ENCODE measurements at regions of chr5 and their contacts with region 1.

Region 1: GRCh38 chr5:34674187-34674586 is 18.1 kb downstream of the RAI14 start:
- DNase-seq: peak; percentile 47 to 88
- H3K4me3 ChIP-seq: no peak overlapping the region
- H3K27ac ChIP-seq: peak overlapping the region; percentile 66
- H3K4me1 ChIP-seq: peaks cover 44% of the 10 kb centered on the region
- H3K27me3 ChIP-seq: no peaks in the 10 kb centered on the region
- CTCF ChIP-seq: no peak

Region 2: DNA sequence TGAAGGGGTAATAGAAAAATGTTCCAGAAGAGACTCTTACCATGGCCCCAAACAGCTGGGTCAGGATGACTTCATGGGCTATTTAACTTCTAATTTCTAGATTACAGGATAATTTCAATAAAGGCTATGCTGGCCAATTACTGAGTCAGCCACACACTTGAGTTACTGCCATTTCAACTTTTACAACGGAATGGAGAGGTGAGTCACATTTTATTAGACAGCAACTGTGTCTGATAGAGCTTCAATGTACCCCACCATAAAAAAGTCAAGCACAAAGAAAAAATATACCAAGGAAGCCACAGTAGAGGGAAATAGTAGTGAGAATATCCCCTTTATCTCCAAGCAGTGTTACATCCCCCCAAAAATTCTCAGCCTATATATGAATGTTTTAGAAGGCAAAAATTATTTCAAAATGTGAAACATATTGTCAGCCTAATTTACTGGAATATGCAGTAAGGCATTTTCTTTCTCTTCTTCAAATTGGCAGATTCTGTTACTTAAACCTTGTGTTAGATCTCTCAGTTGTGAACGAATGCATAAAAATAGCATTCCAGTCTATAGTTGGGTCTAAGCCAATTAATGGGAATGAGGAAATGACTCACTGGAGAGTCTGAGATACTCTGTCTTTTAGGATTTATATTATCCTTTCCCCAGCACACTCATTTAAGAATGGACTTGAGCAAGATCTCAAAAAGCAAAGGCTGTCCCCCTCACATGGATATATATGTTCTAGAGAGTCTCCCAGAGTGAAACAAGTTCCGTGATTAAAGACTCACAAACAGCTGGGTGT is 65.1 kb before region 1 on chr5:
- CTCF ChIA-PET with region 1: no interaction called
- POLR2A ChIA-PET with region 1: interaction called, 19 read pairs
- intact Hi-C with region 1: no loop called
- DNase-seq: peak; percentile 43 to 94
- H3K4me3 ChIP-seq: peak overlapping the region; percentile 12; the same call in 1 of the 2 replicates
- H3K27ac ChIP-seq: peak overlapping the region; percentile 82
- H3K4me1 ChIP-seq: peaks cover 39% of the 10 kb centered on the region
- H3K27me3 ChIP-seq: no peaks in the 10 kb centered on the region
- CTCF ChIP-seq: no peak

Region 3: DNA sequence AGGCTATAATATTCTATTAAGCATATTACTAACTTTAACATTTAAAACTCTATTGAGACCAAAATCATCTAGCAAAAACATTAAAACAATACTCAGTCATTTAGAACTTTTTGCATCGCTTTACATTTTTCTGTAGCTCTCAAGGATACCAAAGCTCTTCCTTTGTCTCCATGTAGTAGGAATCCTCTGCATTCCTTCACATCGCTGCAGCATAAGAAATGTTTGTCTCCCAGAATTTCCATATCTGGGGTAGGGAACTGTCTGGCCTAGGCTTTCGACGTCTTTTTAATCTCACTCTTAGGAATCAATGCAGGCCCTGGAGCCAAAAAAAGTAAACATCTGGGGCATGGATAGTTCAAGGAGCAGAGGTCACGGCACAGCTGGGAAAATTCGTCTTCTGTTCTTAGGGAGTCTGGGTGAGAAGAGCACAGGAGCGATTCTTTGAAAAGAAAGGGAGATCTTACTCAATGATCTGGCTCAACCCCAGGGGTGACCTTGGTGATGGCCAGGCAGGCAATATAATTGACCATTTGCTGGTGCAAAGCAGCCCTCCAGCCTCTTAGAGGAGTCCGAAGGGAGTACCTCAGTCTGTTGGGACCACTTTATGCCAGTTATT is 41.3 kb before region 1 on chr5:
- CTCF ChIA-PET with region 1: no interaction called
- POLR2A ChIA-PET with region 1: no interaction called
- intact Hi-C with region 1: no loop called
- DNase-seq: no peak
- H3K4me3 ChIP-seq: no peak overlapping the region
- H3K27ac ChIP-seq: no peak overlapping the region
- H3K4me1 ChIP-seq: no peaks in the 10 kb centered on the region
- H3K27me3 ChIP-seq: no peaks in the 10 kb centered on the region
- CTCF ChIP-seq: no peak

Region 4: DNA sequence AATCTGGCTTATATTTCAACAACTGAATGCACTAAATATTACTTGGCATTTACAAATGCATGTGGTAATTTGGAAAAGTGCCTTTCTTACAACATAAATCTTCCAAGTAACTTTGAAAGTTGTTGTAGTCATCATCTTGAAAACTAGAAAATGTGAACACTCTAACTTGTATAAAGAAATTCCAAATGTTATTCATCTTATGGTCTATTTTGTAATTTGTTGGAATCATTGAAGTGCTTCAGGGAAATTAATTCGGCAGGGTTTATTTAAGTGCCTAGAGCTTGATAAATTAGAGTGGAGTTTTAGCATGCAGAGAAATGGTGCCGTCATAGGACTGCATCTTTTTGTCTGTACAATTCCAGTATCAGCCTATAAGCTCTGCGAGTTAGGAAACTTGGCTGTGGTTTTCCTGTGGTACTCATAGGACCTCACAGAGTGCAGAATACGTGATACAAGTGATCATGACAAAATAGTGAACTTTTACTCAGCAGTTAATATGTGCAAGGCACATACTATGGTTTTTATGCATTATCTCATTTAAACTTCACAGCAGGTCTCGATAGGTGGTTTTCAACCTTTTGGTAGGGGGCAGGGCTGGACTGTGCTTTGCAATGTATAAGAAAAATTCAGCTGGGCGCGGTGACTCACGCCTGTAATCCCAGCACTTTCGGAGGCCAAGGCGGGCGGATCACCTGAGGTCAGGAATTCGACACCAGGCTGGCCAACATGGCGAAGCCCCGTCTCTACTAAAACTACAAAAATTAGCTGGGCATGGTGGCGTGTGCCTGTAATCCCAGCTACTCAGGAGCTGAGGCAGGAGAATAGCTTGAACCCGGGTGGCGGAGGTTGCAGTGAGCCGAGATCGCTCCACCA is 61.5 kb after region 1 on chr5:
- CTCF ChIA-PET with region 1: no interaction called
- POLR2A ChIA-PET with region 1: no interaction called
- intact Hi-C with region 1: loop called (anchors 5 kb)
- DNase-seq: peak; percentile 50 to 67
- H3K4me3 ChIP-seq: no peak overlapping the region
- H3K27ac ChIP-seq: peak overlapping the region; percentile 20
- H3K4me1 ChIP-seq: peaks cover 14% of the 10 kb centered on the region
- H3K27me3 ChIP-seq: no peaks in the 10 kb centered on the region
- CTCF ChIP-seq: no peak

Region 5: DNA sequence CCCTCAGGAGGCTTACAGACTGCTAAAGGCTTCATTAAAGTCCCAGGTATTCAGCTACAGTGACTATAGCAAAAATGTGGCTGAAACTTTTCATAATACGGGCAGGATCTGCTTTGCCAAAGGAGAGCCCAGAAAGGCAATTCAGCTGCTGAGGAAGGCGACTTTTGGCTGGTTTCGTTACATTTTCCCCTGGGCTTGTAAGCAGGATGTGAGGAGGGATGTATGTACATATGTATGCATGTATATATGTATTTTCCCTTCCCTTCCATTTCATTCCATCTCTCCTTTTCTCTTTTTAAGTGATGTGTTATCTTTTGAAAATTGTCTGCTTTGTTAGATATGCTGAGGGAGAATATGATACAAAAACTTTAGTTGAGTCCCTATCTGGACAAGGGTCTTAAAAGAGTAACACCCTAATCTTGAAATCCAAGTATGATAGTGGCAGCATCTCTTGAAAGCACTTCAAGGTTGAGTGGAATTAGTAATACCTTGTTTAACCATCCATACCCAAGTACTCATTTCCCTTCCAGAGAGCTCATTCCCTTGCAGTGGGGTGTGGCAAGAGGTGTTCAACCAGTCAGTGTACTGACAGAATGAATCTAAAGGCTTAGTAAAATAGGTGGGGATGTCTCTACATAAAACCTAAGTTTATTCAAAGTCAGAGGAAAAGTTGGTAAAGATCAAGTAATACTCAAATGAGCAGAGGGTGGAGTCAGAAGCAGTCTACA is 212.4 kb after region 1 on chr5:
- CTCF ChIA-PET with region 1: no interaction called
- POLR2A ChIA-PET with region 1: no interaction called
- intact Hi-C with region 1: no loop called
- DNase-seq: no peak
- H3K4me3 ChIP-seq: no peak overlapping the region
- H3K27ac ChIP-seq: no peak overlapping the region
- H3K4me1 ChIP-seq: no peaks in the 10 kb centered on the region
- H3K27me3 ChIP-seq: no peaks in the 10 kb centered on the region
- CTCF ChIP-seq: no peak

Region 6: DNA sequence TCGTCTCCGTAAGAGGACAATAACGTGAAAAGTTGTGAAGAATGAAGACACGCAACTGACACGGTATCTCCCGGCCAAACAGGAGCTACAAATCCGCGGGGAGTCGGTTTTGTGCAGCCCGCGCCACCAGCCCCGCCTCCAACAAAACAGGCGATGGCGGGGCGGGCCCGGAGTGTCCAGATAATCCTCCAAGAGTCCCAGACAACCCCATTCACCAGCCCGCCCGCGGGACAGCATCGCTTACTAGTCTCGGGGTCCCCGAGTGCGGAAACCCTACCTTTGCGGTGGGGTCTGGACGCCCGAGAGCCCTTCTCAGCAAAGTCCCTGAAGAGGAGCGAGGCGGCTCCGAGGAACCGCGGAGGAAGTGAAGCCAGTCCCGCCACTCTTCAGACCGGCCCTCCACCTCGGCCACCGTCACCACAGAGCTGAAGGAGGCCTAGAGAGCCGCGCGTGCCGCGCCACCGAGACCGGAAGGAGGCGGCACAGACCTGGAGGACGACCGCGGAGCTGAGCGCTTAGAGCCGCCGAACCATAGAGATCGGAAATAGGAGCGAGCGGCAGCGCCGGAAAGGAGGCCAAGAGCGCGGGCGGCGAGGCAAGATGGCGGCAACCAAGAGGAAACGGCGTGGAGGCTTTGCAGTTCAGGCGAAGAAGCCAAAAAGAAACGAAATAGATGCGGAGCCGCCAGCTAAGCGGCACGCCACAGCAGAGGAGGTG is 241.1 kb after region 1 on chr5 and contains the starts of genes BRIX1 and RAD1:
- CTCF ChIA-PET with region 1: no interaction called
- POLR2A ChIA-PET with region 1: no interaction called
- intact Hi-C with region 1: no loop called
- DNase-seq: peak; percentile 95 to 100
- H3K4me3 ChIP-seq: peak within 1 kb of the TSS; percentile 81
- H3K27ac ChIP-seq: peak within 1 kb of the TSS; percentile 73
- H3K4me1 ChIP-seq: peaks cover 42% of the 10 kb centered on the region
- H3K27me3 ChIP-seq: no peaks in the 10 kb centered on the region
- CTCF ChIP-seq: 0 out of 2 replicates have a peak, but pooled peaks have one; percentile 39
- total RNA-seq, gene BRIX1: 71.9 and 73.4 TPM in 2 replicates
- total RNA-seq, gene RAD1: 43.8 and 63.0 TPM in 2 replicates